Aorta (tissue), 5 donors: ENCODE measurements at regions of chr1 and their contacts with region 1.

Region 1: GRCh38 chr1:3312898-3313575 is 141.4 kb upstream of the ARHGEF16 start:
- DNase-seq: peak; percentile 98 to 99
- ATAC-seq: peak; percentile 95
- H3K4me3 ChIP-seq: no peak overlapping the region
- H3K27ac ChIP-seq: peak overlapping the region; percentile 91 to 99
- H3K4me1 ChIP-seq: no peaks in the 10 kb centered on the region
- H3K27me3 ChIP-seq: no peaks in the 10 kb centered on the region

Region 2: GRCh38 chr1:2906085-2906484 is 407.0 kb before region 1 on chr1:
- intact Hi-C with region 1: no loop called
- DNase-seq: no peak
- ATAC-seq: no peak
- H3K4me3 ChIP-seq: no peak overlapping the region
- H3K27ac ChIP-seq: no peak overlapping the region
- H3K4me1 ChIP-seq: no peaks in the 10 kb centered on the region
- H3K27me3 ChIP-seq: no peaks in the 10 kb centered on the region

Region 3: GRCh38 chr1:3170561-3171453 is 142.2 kb before region 1 on chr1:
- intact Hi-C with region 1: no loop called
- DNase-seq: peak; percentile 89 to 95
- ATAC-seq: peak; percentile 88
- H3K4me3 ChIP-seq: peak overlapping the region in 1 of 2 donors; percentile 8
- H3K27ac ChIP-seq: peak overlapping the region; percentile 78 to 93
- H3K4me1 ChIP-seq: peaks cover 5 to 6% of the 10 kb centered on the region in 2 donors
- H3K27me3 ChIP-seq: no peaks in the 10 kb centered on the region

Region 4: DNA sequence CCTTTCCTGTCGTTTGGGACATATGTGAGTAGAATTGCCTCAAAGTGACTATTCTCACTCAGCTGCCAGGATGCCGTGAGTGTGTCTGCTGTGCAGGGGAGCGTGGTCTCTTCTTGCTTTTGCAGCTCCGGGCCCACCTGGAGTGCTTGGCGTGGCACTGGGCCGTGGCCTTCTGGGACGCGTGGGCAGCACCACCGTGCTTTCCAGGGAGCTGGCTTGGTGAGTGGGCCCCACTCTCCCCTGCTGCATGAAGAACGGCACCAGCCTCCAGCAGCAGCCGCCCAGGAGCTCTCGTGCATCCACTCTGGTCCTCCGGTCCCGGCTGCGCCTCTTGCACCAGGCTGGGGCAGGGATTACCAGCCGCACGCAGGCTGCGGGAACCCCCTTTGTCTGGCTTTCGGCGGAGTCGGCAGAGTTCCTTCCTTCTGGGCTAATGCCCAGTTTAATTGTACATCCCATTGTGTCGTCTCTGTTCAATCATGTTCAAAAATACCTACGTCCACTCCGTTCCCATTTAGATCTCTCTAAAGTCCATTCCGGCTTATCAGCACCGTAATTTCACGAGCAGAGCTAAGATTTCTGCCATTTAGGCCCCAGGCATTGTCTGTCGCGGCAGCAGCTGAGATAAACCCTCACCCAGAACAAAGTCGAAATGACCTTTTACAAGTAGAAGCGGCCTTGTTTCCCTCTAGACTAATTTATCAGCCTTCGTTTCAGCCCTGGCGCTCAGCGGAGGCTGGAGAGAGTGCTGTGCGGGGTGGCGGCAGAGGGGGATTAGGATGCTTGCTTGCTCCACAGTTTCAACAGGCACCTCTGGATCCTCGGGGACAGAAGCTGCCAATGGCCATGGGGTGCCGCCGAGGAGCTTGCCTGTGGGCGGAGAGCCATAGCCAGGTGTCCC is 114.4 kb before region 1 on chr1:
- intact Hi-C with region 1: loop called in 1 of 2 experiments (anchors 5 kb)
- DNase-seq: no peak
- ATAC-seq: no peak
- H3K4me3 ChIP-seq: no peak overlapping the region
- H3K27ac ChIP-seq: peak overlapping the region; percentile 46 to 99
- H3K4me1 ChIP-seq: no peaks in the 10 kb centered on the region
- H3K27me3 ChIP-seq: no peaks in the 10 kb centered on the region

Region 5: GRCh38 chr1:3369446-3370076 is 56.5 kb after region 1 on chr1:
- intact Hi-C with region 1: loop called in 1 of 2 experiments (anchors 1 kb)
- DNase-seq: peak; percentile 89
- ATAC-seq: peak; percentile 84
- H3K4me3 ChIP-seq: no peak overlapping the region
- H3K27ac ChIP-seq: peak overlapping the region; percentile 93 to 99
- H3K4me1 ChIP-seq: peaks cover 8 to 9% of the 10 kb centered on the region in 2 donors
- H3K27me3 ChIP-seq: no peaks in the 10 kb centered on the region